Calu3 (cell line): ENCODE measurements at regions of chr5 and their contacts with region 1.

Region 1: DNA sequence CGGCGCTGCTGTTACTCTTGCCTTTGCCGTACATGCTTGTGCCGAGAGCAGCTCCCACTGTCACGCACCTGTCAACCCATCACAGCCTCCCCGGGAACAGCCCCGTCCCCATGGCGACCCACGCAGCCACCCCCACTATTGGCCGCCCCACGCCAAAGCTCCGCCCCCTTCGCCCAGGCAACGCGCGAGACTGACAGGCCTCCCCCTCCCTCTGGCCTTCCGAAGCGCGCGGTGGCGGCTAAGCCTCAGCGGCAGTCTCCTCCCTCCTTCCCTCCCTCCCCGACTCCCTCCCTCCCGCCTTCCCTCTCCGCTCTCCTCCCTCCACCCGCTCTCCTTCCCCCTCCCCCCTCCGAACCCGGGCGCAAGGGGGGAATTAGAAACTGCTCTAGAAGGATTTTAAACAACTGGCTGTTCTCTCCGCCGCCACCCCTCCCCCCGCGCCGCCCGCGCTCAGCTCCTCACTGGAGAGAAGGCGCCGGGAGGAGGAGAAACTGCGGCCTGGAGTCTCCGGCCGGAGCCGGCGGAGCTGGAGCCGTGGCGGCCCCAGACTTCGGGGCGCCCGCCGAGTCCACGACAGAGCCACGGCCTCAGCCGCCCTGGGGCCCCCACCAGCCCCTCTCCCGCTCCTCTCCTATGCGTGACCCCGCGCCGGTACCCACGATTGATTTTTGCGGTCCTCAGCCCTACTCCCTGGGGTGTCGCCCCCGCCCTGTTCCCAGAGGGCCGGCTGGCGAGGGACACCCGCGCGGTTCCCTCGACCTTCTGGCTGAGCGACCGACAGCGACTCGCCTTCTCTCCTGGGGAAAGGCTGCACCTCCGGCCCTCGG is at the start of gene SSBP2:
- DNase-seq: peak; percentile 100
- H3K4me3 Mint-ChIP-seq: peak within 1 kb of the TSS; percentile 91
- H3K27ac Mint-ChIP-seq: peak within 1 kb of the TSS; percentile 51
- H3K4me1 Mint-ChIP-seq: peaks cover 44% of the 10 kb centered on the region
- H3K27me3 Mint-ChIP-seq: no peaks in the 10 kb centered on the region
- CTCF ChIP-seq: no peak
- total RNA-seq, gene SSBP2: 15.5 and 18.9 TPM in 2 replicates

Region 2: GRCh38 chr5:81389025-81389424 is 362.2 kb before region 1 on chr5:
- CTCF ChIA-PET with region 1: interaction called, 10 read pairs
- intact Hi-C with region 1: no loop called
- DNase-seq: no peak
- H3K4me3 Mint-ChIP-seq: no peak overlapping the region
- H3K27ac Mint-ChIP-seq: no peak overlapping the region
- H3K4me1 Mint-ChIP-seq: no peaks in the 10 kb centered on the region
- H3K27me3 Mint-ChIP-seq: no peaks in the 10 kb centered on the region
- CTCF ChIP-seq: no peak

Region 3: GRCh38 chr5:81506900-81507588 is 244.2 kb before region 1 on chr5:
- CTCF ChIA-PET with region 1: interaction called, 3 read pairs
- intact Hi-C with region 1: loop called (anchors 1 kb)
- DNase-seq: peak; percentile 61
- H3K4me3 Mint-ChIP-seq: no peak overlapping the region
- H3K27ac Mint-ChIP-seq: no peak overlapping the region
- H3K4me1 Mint-ChIP-seq: no peaks in the 10 kb centered on the region
- H3K27me3 Mint-ChIP-seq: no peaks in the 10 kb centered on the region
- CTCF ChIP-seq: peak; percentile 78

Region 4: GRCh38 chr5:81657389-81657788 is 93.8 kb before region 1 on chr5:
- CTCF ChIA-PET with region 1: interaction called, 4 read pairs
- intact Hi-C with region 1: loop called (anchors 5 kb)
- DNase-seq: peak; percentile 83
- H3K4me3 Mint-ChIP-seq: no peak overlapping the region
- H3K27ac Mint-ChIP-seq: no peak overlapping the region
- H3K4me1 Mint-ChIP-seq: peaks cover 26% of the 10 kb centered on the region
- H3K27me3 Mint-ChIP-seq: no peaks in the 10 kb centered on the region
- CTCF ChIP-seq: no peak

Region 5: GRCh38 chr5:81971712-81972495 is 220.7 kb after region 1 on chr5 and contains the start of gene ATG10:
- CTCF ChIA-PET with region 1: interaction called, 4 read pairs
- intact Hi-C with region 1: loop called (anchors 10 kb)
- DNase-seq: peak; percentile 95
- H3K4me3 Mint-ChIP-seq: peak within 1 kb of the TSS; percentile 77
- H3K27ac Mint-ChIP-seq: peak within 1 kb of the TSS; percentile 87
- H3K4me1 Mint-ChIP-seq: no peaks in the 10 kb centered on the region
- H3K27me3 Mint-ChIP-seq: no peaks in the 10 kb centered on the region
- CTCF ChIP-seq: no peak
- total RNA-seq, gene ATG10: 8.9 and 10.0 TPM in 2 replicates

Region 6: DNA sequence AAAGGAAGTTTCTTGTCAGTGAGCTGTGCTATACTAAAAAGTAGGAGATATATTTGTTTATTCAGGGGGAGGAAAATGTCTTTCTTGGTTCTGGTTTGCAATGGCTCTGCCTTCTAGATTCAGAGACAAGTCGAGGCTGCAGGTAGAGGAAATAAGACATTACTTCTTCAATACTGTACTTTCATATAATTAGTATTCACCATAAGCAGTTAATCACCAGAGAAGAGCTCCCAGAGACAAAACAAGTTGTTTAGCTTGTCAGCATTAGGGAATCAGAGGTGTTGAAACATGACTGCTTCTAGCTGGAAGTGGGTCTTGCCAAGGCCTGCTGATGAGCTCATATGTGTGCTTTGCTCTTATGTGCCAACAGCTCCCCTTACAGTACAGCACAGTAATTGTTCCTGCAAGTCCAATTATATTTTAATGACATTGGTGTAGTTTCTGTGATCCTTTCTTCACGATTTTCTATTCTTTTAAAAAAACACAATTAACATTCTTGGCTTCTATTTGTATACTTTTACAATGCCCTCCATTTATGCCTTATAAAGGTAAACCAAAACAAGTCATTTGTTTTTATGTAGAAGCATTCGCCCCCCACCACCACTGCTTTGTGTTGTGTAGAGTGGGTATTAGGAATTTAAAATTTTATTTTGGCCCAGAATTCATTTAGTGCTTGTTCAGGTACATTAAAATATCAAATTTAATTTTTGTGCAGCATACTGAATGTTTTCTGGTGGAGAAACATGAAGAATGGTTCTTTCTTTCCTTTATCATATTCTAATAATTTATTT is 414.7 kb after region 1 on chr5:
- CTCF ChIA-PET with region 1: interaction called, 18 read pairs
- intact Hi-C with region 1: loop called (anchors 2 kb)
- DNase-seq: peak; percentile 61
- H3K4me3 Mint-ChIP-seq: no peak overlapping the region
- H3K27ac Mint-ChIP-seq: peak overlapping the region; percentile 70
- H3K4me1 Mint-ChIP-seq: peaks cover 49% of the 10 kb centered on the region
- H3K27me3 Mint-ChIP-seq: no peaks in the 10 kb centered on the region
- CTCF ChIP-seq: peak; percentile 68